Activated CD8-positive, alpha-beta T cell treated with anti-CD3 and anti-CD28 coated beads, Interleukin-2, amount 10 ng/mL, durations not matched to agents 7 days and 5 days (primary cell): ENCODE measurements at regions of chr1 and their contacts with region 1.

Region 1: GRCh38 chr1:204806943-204807687 is 63.5 kb upstream of the NFASC start:
- DNase-seq: peak; percentile 90
- ATAC-seq: peak; percentile 96
- H3K4me3 Mint-ChIP-seq: peak overlapping the region; percentile 78
- H3K27ac Mint-ChIP-seq: peak overlapping the region; percentile 88
- H3K4me1 Mint-ChIP-seq: peaks cover 25% of the 10 kb centered on the region
- H3K27me3 Mint-ChIP-seq: peaks cover 11% of the 10 kb centered on the region

Region 2: GRCh38 chr1:204494281-204495077 is 312.6 kb before region 1 on chr1 and contains the start of gene PIK3C2B:
- CTCF ChIA-PET with region 1: interaction called, 14 read pairs
- POLR2A ChIA-PET with region 1: no interaction called
- DNase-seq: peak; percentile 80
- ATAC-seq: peak; percentile 86
- H3K4me3 Mint-ChIP-seq: peak within 1 kb of the TSS; percentile 77
- H3K27ac Mint-ChIP-seq: peak within 1 kb of the TSS; percentile 89
- H3K4me1 Mint-ChIP-seq: peaks cover 58% of the 10 kb centered on the region
- H3K27me3 Mint-ChIP-seq: peaks cover 2% of the 10 kb centered on the region
- total RNA-seq, gene PIK3C2B: 26.2 to 28.4 TPM

Region 3: DNA sequence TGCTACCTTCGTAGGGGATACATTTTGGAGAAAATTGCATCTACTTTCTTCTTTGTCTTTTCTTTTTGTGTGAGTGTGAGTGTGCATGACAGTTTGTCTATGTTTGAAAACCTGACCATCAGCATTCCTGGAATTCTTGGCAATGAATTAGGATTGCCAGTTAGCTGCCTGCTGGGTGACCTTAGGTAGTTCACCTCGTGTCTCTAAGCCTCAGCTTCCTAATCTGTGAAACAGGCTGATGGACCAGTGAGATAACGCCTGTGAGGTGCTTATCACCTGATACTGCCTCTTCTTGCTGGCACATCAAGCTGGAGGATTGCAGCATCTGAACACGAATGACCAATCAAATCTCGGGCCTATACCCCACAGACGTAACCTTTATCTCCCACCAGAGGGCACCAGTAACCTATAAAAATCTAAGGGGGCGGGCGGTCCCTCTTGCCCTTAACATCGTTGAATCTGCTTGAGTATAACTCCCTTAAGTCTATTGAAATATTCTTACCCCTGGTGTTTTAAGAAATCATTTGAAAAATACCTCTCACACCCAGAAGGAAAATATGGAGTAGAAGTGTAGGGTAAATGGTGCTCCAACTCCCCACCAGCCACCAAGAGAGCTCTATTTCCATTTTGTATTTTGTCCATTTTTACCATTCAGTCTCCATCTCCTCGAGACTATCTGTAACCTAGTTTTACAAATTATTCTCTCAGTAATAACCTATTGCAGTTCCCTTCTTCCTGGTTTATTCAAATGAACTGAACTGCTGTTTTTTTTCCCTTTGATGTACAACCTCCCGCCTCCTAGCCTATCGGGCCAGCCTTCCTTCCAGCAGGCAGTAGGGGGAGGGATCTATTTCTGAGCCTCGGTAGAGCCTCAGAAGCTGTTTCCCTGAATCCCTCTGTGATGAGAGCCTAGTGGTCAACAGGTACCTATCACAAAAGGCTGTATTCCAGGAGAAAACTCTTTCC is 241.2 kb before region 1 on chr1:
- CTCF ChIA-PET with region 1: interaction called, 175 read pairs
- POLR2A ChIA-PET with region 1: interaction called, 3 read pairs
- DNase-seq: peak; percentile 77
- ATAC-seq: peak; percentile 80
- H3K4me3 Mint-ChIP-seq: no peak overlapping the region
- H3K27ac Mint-ChIP-seq: peak overlapping the region; percentile 59
- H3K4me1 Mint-ChIP-seq: peaks cover 56% of the 10 kb centered on the region
- H3K27me3 Mint-ChIP-seq: no peaks in the 10 kb centered on the region

Region 4: GRCh38 chr1:204623894-204624361 is 183.2 kb before region 1 on chr1:
- CTCF ChIA-PET with region 1: interaction called, 25 read pairs
- POLR2A ChIA-PET with region 1: no interaction called
- DNase-seq: peak; percentile 38
- ATAC-seq: peak; percentile 68
- H3K4me3 Mint-ChIP-seq: no peak overlapping the region
- H3K27ac Mint-ChIP-seq: no peak overlapping the region
- H3K4me1 Mint-ChIP-seq: no peaks in the 10 kb centered on the region
- H3K27me3 Mint-ChIP-seq: no peaks in the 10 kb centered on the region

Region 5: DNA sequence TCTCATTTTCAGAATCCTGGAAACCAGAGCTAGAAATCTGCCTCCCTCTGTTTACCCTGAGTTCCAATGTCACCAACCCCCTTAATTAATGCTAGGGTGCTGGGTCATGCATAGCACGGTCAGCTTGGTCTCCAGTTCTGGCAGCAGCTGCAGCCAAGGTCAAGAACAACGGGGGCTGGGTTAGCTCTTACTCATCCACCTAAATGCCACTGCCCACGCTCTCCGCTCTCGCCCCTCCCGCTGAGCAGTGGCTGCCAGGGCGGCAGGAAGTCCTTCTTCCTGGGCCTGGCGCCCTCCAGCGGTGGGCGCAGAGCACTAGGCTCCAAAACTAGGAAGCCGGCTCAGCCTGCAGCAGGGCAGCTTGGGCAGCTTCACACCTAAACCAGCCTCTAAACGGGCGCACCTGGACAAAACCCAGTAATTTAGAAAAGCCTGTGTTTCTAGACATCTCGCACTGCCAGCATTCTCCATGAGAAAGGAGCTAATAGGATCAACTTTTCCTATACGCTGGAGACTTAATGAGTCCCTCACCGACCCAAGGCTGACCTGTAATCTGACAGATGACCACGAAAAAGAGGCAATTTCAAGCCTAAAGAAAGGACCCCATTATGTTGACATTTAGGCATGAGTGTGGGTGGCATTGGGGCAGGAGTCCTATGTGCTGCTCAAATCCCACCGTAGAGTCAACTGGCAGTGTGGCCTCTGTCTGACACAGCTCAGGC is 43.2 kb before region 1 on chr1:
- CTCF ChIA-PET with region 1: interaction called, 44 read pairs
- POLR2A ChIA-PET with region 1: no interaction called
- DNase-seq: peak; percentile 79
- ATAC-seq: peak; percentile 97
- H3K4me3 Mint-ChIP-seq: peak overlapping the region; percentile 32
- H3K27ac Mint-ChIP-seq: no peak overlapping the region
- H3K4me1 Mint-ChIP-seq: peaks cover 9% of the 10 kb centered on the region
- H3K27me3 Mint-ChIP-seq: peaks cover 39% of the 10 kb centered on the region

Region 6: DNA sequence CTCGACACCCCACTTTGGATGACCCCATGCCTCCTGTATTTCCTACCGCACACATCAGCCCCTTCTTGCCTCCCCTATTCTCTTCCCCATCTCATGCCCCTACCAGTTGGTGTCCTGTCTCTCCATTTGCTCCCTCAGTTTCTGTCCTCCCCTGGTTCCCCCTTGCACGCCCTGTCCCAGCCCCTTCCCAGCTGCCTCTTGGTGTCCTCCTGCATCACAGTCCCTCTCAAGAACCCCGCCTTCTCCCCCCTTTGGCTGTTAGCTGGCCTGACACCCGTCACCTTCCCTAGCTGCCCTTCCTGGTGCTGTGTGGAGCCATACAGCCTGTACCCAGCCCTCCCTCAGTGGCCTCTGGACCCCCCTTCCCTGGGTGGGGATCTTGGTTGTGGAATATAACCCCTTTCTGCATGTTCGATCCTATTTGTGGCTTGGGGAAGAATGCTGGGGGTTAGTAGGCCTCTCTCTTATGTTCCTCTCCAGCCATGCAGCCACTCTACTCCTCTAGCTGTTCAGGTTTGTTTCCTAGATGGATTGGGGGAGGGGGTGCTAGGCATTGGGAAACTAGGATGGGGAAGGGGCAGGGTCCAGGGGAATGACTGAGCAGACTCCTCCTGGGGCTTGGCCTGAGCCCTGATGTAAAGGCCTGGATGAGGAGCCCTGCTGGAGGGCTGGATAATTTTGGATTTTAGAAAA is 22.2 kb after region 1 on chr1:
- CTCF ChIA-PET with region 1: interaction called, 24 read pairs
- POLR2A ChIA-PET with region 1: no interaction called
- DNase-seq: no peak
- ATAC-seq: no peak
- H3K4me3 Mint-ChIP-seq: peak overlapping the region; percentile 20
- H3K27ac Mint-ChIP-seq: no peak overlapping the region
- H3K4me1 Mint-ChIP-seq: peaks cover 5% of the 10 kb centered on the region
- H3K27me3 Mint-ChIP-seq: peaks cover 58% of the 10 kb centered on the region

Region 7: DNA sequence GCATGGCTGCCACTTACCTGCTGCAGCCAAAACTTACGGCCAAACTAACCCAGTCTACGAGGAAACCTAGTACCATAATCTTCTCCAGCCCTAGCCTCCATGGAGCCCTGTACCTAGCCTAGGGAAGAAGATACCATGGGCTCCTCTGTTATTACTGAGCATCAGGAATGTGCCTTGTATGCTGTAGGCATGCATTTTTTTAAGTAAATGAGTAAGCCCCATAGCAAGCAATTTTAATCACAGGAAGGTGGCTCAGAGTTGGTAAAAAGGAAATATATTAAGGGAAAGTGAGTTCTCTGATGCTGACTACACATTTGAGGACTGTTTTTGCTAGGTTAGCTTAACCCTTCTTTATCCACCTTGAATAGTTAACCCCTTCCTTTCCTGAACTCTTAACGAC is 84.7 kb after region 1 on chr1:
- CTCF ChIA-PET with region 1: no interaction called
- POLR2A ChIA-PET with region 1: no interaction called
- DNase-seq: no peak
- ATAC-seq: no peak
- H3K4me3 Mint-ChIP-seq: no peak overlapping the region
- H3K27ac Mint-ChIP-seq: no peak overlapping the region
- H3K4me1 Mint-ChIP-seq: no peaks in the 10 kb centered on the region
- H3K27me3 Mint-ChIP-seq: peaks cover 36% of the 10 kb centered on the region